ENCODE measurements at regions of chr20 and their contacts with region 1.

Region 1: GRCh38 chr20:2663887-2664719 is at the start of gene IDH3B:
- DNase-seq: peak; percentile 90
- H3K4me3 Mint-ChIP-seq: peak within 1 kb of the TSS; percentile 92
- H3K27ac Mint-ChIP-seq: peak within 1 kb of the TSS; percentile 95
- H3K4me1 Mint-ChIP-seq: peaks cover 15% of the 10 kb centered on the region
- H3K27me3 Mint-ChIP-seq: peaks cover 4% of the 10 kb centered on the region
- total RNA-seq, gene IDH3B: 111 and 112 TPM in 2 replicates

Region 2: DNA sequence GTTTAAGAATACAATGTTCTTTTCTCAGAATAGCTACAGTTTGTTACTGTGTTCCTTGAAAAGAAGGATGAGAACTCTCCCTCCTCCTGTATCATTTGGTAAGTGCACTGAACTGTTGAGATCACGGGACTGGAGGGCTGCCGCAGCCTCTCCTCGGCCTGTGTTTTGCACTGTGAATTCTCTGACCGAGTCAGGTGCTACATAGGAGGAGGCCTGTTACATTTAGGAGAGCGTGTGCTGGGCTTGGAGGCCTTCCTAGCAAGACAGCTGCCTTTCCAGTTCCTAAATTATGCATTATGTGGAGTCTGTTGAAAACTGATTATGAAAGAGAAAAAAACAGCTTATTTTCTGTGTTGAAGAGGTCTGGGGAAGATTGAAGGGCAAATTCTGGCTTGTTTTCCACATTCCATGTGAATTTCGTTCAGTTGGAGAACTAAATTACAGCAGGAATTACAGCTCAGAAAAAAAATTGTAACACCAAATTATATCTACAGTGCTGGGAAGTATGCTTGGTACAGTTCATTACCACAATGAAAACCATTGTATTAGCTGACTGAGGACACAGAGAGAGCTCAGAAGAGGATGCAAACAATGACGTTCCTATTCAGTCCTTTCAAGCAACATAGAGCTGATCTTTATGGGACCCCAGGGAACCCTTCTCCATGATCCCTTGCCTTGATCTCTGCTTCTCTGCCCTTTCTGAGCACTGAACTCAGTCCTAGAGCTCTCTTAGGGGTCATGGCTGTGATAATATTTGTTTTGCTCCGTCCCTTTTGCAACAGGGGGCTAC is 125.0 kb before region 1 on chr20:
- intact Hi-C with region 1: no loop called
- DNase-seq: no peak
- H3K4me3 Mint-ChIP-seq: no peak overlapping the region
- H3K27ac Mint-ChIP-seq: no peak overlapping the region
- H3K4me1 Mint-ChIP-seq: no peaks in the 10 kb centered on the region
- H3K27me3 Mint-ChIP-seq: peaks cover 28% of the 10 kb centered on the region

Region 3: DNA sequence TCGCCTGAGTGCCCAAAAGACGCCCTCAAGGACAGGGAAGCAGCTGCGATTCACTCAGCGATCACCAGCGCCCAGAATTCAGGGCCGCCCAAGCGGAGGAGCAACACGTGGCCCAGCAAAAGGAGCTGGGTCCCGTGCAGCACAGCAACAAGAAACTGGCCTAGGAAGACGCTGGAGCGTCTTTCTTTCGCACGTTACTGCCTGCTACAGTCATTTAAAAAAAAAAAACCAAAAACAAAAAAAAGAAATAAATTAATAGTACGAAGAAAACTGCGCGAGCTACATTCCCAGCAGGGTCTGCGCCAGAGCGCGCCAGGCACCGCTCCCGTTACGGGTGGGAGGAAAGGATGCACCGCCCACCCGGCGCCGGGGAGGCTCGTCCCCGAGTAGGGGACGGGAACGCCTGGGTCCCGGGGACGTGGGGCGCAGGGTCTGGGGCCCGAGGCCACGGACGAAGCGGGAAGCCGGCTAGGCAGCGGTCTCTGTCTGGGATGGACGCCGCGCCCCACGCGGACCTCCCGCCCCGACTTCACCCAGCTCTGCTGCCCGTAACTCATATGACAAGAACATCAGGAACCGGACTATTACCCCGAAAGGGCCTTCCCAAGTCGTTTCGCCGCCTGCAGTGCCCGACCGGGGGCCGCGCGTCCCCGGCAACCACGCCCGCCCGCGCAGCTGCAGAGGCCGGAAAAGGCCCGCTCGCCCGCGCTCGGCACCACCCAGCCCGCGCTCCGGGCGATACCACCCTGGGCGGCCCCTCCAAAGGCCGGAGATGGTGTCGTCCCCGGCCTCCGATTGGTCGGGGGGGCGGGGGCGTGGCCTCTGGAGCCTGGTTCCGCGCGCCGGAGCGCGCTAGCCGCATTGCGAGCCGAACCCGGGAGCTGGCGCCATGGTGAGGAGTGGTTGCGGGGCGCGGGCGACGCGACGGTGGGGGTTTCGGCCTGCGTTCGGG is 12.1 kb before region 1 on chr20 and contains the start of gene NOP56:
- intact Hi-C with region 1: loop called (anchors 1 kb)
- DNase-seq: peak; percentile 92
- H3K4me3 Mint-ChIP-seq: peak within 1 kb of the TSS; percentile 89
- H3K27ac Mint-ChIP-seq: peak within 1 kb of the TSS; percentile 87
- H3K4me1 Mint-ChIP-seq: peaks cover 30% of the 10 kb centered on the region
- H3K27me3 Mint-ChIP-seq: no peaks in the 10 kb centered on the region
- total RNA-seq, gene NOP56: 693 and 705 TPM in 2 replicates

Measured in activated T-helper 2 cell treated with anti-CD3 and anti-CD28 coated beads, Interferon-gamma antibody, Interleukin-2, Interleukin-4, amounts not matched to agents 10 μg/mL and 5 μg/mL and 100 μg/mL, durations not matched to agents 14 hours and 24 hours and 36 hours (primary cell).